H1 (cell line): ENCODE measurements at regions of chr2 and their contacts with region 1.

Region 1: GRCh38 chr2:10122386-10123280 is at the start of gene RRM2:
- DNase-seq: peak; percentile 71 to 96
- H3K4me3 ChIP-seq: peak within 1 kb of the TSS; percentile 85 to 96 (median 88)
- H3K27ac ChIP-seq: peak within 1 kb of the TSS; percentile 85
- H3K4me1 ChIP-seq: peaks cover 1 to 4% (median 4%) of the 10 kb centered on the region in 4 experiments; a peak in 5 of 7 replicates
- H3K27me3 ChIP-seq: no peaks in the 10 kb centered on the region
- CTCF ChIP-seq: no peak
- EP300 ChIP-seq: no peak
- POLR2A ChIP-seq: peak; percentile 97 to 98
- RAD21 ChIP-seq: no peak
- total RNA-seq, gene RRM2: 215 and 228 TPM in 2 replicates

Region 2: GRCh38 chr2:10009811-10010292 is 112.8 kb before region 1 on chr2:
- CTCF ChIA-PET with region 1: no interaction called
- POLR2A ChIA-PET with region 1: no interaction called
- DNase-seq: no peak
- H3K4me3 ChIP-seq: no peak overlapping the region
- H3K27ac ChIP-seq: no peak overlapping the region
- H3K4me1 ChIP-seq: no peaks in the 10 kb centered on the region
- H3K27me3 ChIP-seq: no peaks in the 10 kb centered on the region
- CTCF ChIP-seq: no peak
- EP300 ChIP-seq: no peak
- POLR2A ChIP-seq: no peak
- RAD21 ChIP-seq: no peak

Region 3: GRCh38 chr2:10072656-10073480 is 49.8 kb before region 1 on chr2:
- CTCF ChIA-PET with region 1: interaction called, 13 read pairs
- POLR2A ChIA-PET with region 1: interaction called, 5 read pairs
- DNase-seq: peak; percentile 43 to 82
- H3K4me3 ChIP-seq: no peak overlapping the region
- H3K27ac ChIP-seq: no peak overlapping the region
- H3K4me1 ChIP-seq: peaks cover 0 to 12% (median 7%) of the 10 kb centered on the region in 4 experiments; a peak in 2 of 7 replicates
- H3K27me3 ChIP-seq: peaks cover 0 to under 1% (median 0%) of the 10 kb centered on the region in 4 experiments; a peak in 1 of 7 replicates
- CTCF ChIP-seq: peak; percentile 84 to 90 (median 89)
- EP300 ChIP-seq: no peak
- POLR2A ChIP-seq: no peak
- RAD21 ChIP-seq: peak; percentile 76 to 82

Region 4: GRCh38 chr2:10135296-10136089 is 12.9 kb after region 1 on chr2:
- CTCF ChIA-PET with region 1: interaction called, 141 read pairs
- POLR2A ChIA-PET with region 1: interaction called, 87 read pairs
- DNase-seq: no peak
- H3K4me3 ChIP-seq: no peak overlapping the region
- H3K27ac ChIP-seq: no peak overlapping the region
- H3K4me1 ChIP-seq: peaks cover 2 to 14% (median 5%) of the 10 kb centered on the region in 4 experiments; a peak in 5 of 7 replicates
- H3K27me3 ChIP-seq: no peaks in the 10 kb centered on the region
- CTCF ChIP-seq: no peak
- EP300 ChIP-seq: no peak
- POLR2A ChIP-seq: no peak; a peak in 1 of 3 replicates
- RAD21 ChIP-seq: no peak

Region 5: DNA sequence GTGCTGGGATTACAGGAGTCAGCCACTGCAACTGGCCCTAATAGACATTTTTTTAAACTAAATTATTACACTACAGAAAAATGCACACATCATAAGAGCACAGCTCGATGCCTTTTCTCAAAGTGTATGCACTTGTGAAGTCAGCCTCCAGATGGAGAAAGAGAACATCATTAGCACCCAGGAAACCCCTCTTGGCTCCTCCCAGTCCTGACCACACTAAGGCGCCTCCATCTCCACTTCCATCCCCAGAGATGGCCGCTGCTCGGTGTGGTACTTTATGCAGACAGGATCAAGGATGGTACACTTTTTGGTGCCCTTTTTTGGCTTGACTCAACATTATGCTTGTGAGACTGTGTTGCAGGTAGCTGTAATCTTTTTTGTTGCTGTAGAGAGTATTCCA is 34.7 kb after region 1 on chr2:
- CTCF ChIA-PET with region 1: interaction called, 12 read pairs
- POLR2A ChIA-PET with region 1: no interaction called
- DNase-seq: no peak
- H3K4me3 ChIP-seq: no peak overlapping the region
- H3K27ac ChIP-seq: no peak overlapping the region
- H3K4me1 ChIP-seq: peaks cover 0 to 7% (median 0%) of the 10 kb centered on the region in 4 experiments; a peak in 1 of 7 replicates
- H3K27me3 ChIP-seq: no peaks in the 10 kb centered on the region
- CTCF ChIP-seq: peak in 1 of 3 experiments; percentile 2; a peak in 1 of 4 replicates
- EP300 ChIP-seq: no peak
- POLR2A ChIP-seq: no peak
- RAD21 ChIP-seq: peak; percentile 15 to 27; a peak in 3 of 4 replicates